CD4-positive, alpha-beta T cell (primary cell): ENCODE measurements at regions of chr16 and their contacts with region 1.

Region 1: GRCh38 chr16:23182460-23183309 is at the start of gene SCNN1G:
- DNase-seq: peak; percentile 25 to 87 (median 60)
- ATAC-seq: peak; percentile 99
- H3K4me3 ChIP-seq: no peak within 1 kb of the TSS
- H3K4me3 Mint-ChIP-seq: no peak within 1 kb of the TSS
- H3K27ac ChIP-seq: no peak within 1 kb of the TSS
- H3K27ac Mint-ChIP-seq: no peak within 1 kb of the TSS
- H3K4me1 ChIP-seq: peaks cover 11% of the 10 kb centered on the region
- H3K4me1 Mint-ChIP-seq: peaks cover 5% of the 10 kb centered on the region
- H3K27me3 ChIP-seq: peaks cover 55 to 77% of the 10 kb centered on the region in 2 experiments
- H3K27me3 Mint-ChIP-seq: peaks cover 83% of the 10 kb centered on the region
- CTCF ChIP-seq: peak; percentile 61
- total RNA-seq, gene SCNN1G: not detected

Region 2: DNA sequence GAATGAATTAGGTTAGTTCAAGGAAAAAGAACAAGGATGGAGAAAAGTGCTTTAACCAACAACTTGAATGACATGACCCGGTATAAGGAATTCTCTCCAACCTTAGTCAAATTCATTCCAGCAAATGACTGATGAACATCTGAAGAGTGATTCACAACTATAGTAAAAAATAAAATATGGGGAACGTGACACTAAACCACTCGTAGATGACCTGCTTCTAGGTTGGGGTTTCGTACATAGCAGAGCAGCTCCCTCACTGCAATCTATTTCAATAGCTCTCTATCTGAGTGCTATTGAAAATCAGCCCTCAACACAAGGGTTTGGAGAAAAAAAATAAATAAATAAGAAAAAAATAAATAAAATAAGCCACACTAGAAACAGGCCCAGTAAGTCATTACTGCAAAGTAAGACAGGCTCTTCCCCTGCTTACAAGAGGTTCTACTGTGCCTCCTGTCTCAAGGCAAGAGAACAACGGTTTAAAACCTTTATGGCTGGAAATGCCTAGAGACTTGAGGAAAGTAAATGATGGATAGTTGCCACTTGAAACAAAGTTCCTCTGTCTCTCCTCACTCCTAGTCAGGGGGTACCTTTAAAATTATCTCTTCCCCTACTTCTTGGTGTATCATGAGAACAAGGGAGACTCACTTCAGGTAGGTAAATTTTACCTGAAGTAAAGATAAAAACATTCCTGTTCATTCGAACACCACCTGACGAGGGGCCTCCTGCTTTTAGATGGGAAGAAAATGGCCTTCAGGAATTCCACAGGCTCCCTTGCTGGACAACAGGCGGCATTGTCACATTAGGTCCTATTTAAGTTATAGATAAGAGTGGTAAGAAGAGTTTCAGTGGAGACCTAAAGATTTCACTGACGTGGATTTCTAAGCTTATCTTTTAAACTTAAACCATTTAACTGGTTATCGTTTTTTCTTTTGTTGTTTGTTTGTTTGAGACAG is 249.8 kb after region 1 on chr16:
- CTCF ChIA-PET with region 1: interaction called, 6 read pairs
- POLR2A ChIA-PET with region 1: no interaction called
- intact Hi-C with region 1: loop called in 1 of 2 experiments (anchors 2 kb)
- DNase-seq: no peak
- ATAC-seq: no peak
- H3K4me3 ChIP-seq: no peak overlapping the region
- H3K4me3 Mint-ChIP-seq: no peak overlapping the region
- H3K27ac ChIP-seq: no peak overlapping the region
- H3K27ac Mint-ChIP-seq: no peak overlapping the region
- H3K4me1 ChIP-seq: no peaks in the 10 kb centered on the region
- H3K4me1 Mint-ChIP-seq: no peaks in the 10 kb centered on the region
- H3K27me3 ChIP-seq: no peaks in the 10 kb centered on the region
- H3K27me3 Mint-ChIP-seq: no peaks in the 10 kb centered on the region
- CTCF ChIP-seq: no peak